A549 (cell line): ENCODE measurements at regions of chr9 and their contacts with region 1.

Region 1: DNA sequence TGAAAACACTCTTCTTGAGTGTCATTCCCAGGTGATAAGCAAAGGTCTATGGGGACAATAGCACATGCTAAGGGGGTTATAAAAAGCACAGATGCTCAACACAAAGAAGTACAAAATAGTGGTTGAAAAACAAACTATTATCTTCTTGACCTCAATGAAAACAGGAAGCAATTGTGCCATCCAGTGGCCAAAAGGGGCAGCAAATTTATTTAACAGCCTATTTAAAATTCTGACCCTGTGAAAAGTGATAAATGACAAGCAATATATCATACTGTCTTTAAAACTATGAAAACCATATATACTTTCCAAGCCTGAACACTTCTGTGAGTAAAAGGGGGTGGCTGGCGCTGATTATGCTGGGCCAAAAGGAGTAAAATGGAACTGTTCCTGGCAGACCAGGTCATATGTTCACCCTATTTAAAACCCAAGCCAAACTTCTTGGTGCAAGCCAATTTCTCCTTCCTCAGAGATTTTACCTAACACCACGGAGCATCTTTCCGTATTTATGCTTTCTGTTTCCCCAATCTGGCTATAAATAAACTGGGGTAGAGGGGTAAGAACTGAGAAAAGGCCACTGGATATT is 29.7 kb downstream of the TEX10 start:
- DNase-seq: peak; percentile 18 to 52
- ATAC-seq: peak; percentile 65 to 71; a peak in 5 of 6 replicates
- H3K4me3 ChIP-seq: no peak overlapping the region
- H3K27ac ChIP-seq: no peak overlapping the region
- H3K4me1 ChIP-seq: no peaks in the 10 kb centered on the region
- CTCF ChIP-seq: peak; percentile 72
- EP300 ChIP-seq: no peak
- POLR2A ChIP-seq: no peak
- RAD21 ChIP-seq: peak; percentile 47 to 58

Region 2: GRCh38 chr9:100341889-100342288 is 18.8 kb after region 1 on chr9:
- CTCF ChIA-PET with region 1: interaction called, 19 read pairs
- POLR2A ChIA-PET with region 1: no interaction called
- DNase-seq: no peak
- ATAC-seq: no peak; a peak in 1 of 6 replicates
- H3K4me3 ChIP-seq: no peak overlapping the region
- H3K27ac ChIP-seq: no peak overlapping the region
- H3K4me1 ChIP-seq: no peaks in the 10 kb centered on the region
- CTCF ChIP-seq: no peak
- EP300 ChIP-seq: no peak
- POLR2A ChIP-seq: no peak
- RAD21 ChIP-seq: no peak